Activated CD4-positive, alpha-beta T cell treated with anti-CD3 and anti-CD28 coated beads for 36 hours (primary cell): ENCODE measurements at regions of chr1 and their contacts with region 1.

Region 1: GRCh38 chr1:198638894-198639635 is at the start of gene PTPRC:
- DNase-seq: no peak
- ATAC-seq: peak; percentile 62
- H3K4me3 Mint-ChIP-seq: peak within 1 kb of the TSS; percentile 87
- H3K27ac Mint-ChIP-seq: peak within 1 kb of the TSS; percentile 99
- H3K4me1 Mint-ChIP-seq: peaks cover 52% of the 10 kb centered on the region
- H3K27me3 Mint-ChIP-seq: no peaks in the 10 kb centered on the region
- total RNA-seq, gene PTPRC: 458 to 564 TPM

Region 2: DNA sequence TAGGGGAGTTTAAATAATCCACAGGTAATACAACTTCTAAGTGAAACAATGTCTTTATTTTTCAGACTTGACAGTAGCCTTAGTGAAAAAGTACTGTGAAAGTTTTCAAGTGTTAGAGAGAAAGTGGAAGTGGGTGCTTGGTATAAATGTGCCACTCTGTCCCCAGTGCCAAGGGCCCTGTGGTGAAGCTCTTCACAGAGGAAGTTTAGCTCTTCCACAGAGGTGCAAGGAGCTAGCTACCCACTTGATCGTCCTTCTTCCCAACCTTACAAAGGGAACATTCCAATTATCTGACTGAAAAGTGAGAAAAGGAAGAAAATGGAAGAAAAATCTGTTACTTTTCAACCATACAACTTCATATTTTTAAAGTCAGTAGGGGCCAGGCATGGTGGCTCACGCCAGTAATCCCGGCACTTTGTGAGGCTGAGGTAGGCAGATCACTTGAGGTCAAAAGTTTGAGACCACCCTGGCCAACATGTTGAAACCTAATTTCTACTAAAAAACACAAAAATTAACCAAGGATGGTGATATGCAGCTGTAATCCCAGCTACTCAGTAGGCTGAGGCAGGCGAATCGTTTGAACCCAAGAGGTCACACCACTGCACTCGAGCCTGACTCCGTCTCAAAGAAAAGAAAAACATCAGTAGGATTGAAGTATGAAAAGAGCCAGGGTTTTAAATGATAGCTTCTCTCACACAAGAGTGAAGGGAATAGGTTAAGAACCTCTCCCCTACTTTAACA is 41.2 kb before region 1 on chr1:
- CTCF ChIA-PET with region 1: no interaction called
- POLR2A ChIA-PET with region 1: interaction called, 3 read pairs
- intact Hi-C with region 1: loop called (anchors 1 to 5 kb)
- DNase-seq: no peak
- ATAC-seq: no peak
- H3K4me3 Mint-ChIP-seq: peak overlapping the region; percentile 52
- H3K27ac Mint-ChIP-seq: peak overlapping the region; percentile 87
- H3K4me1 Mint-ChIP-seq: peaks cover 80% of the 10 kb centered on the region
- H3K27me3 Mint-ChIP-seq: no peaks in the 10 kb centered on the region

Region 3: GRCh38 chr1:198612471-198613260 is 26.4 kb before region 1 on chr1:
- CTCF ChIA-PET with region 1: interaction called, 11 read pairs
- POLR2A ChIA-PET with region 1: interaction called, 3 read pairs
- intact Hi-C with region 1: no loop called
- DNase-seq: no peak
- ATAC-seq: peak; percentile 48
- H3K4me3 Mint-ChIP-seq: peak overlapping the region; percentile 77
- H3K27ac Mint-ChIP-seq: peak overlapping the region; percentile 99
- H3K4me1 Mint-ChIP-seq: peaks cover 83% of the 10 kb centered on the region
- H3K27me3 Mint-ChIP-seq: no peaks in the 10 kb centered on the region

Region 4: DNA sequence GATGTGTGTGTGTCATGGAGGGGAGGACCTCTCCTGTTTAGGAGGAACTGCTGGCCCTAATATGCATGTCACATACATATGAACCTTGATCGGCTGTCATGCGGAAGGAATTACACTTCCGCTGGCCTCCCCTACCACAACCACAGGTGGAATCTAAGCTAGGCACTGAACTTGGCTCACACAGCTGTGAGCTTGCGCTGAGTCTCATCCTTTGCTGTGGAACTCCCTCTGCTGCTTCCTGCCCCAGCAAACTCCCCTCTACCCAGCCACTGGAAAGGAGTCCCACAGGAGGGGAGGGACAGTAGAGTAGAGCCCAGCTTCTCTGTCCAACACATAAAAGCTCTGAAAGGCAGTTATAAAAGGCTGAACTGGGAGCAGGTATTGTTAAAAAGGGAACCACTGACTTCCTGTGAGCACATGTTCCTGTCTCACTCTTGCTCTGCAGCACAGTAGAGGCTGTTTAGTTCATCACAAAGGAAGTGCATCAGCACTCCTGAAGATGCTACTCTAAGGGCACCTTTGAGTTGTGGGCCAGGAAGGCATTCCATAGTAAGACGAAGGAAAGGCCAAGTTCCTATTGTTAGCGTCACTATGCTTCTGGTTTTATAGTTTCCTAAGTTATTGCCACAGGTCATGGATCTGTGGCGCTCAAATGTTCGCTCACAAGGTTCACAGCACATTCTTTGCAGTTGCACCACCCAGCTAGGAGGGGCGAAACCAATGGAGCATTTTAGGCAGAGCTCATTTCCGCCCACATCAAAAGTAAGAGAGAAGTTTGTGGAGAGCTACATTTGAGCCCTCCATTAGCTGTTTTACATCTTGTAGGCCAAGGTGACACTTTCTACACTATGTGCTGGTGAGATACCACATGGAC is 17.9 kb before region 1 on chr1:
- CTCF ChIA-PET with region 1: interaction called, 110 read pairs
- POLR2A ChIA-PET with region 1: interaction called, 12 read pairs
- intact Hi-C with region 1: loop called (anchors 1 kb)
- DNase-seq: peak; percentile 84
- ATAC-seq: peak; percentile 77
- H3K4me3 Mint-ChIP-seq: peak overlapping the region; percentile 76
- H3K27ac Mint-ChIP-seq: peak overlapping the region; percentile 100
- H3K4me1 Mint-ChIP-seq: peaks cover 94% of the 10 kb centered on the region
- H3K27me3 Mint-ChIP-seq: no peaks in the 10 kb centered on the region

Region 5: GRCh38 chr1:198627436-198628066 is 11.5 kb before region 1 on chr1:
- CTCF ChIA-PET with region 1: interaction called, 110 read pairs
- POLR2A ChIA-PET with region 1: interaction called, 4 read pairs
- intact Hi-C with region 1: loop called in 1 of 2 experiments (anchors 1 kb)
- DNase-seq: no peak
- ATAC-seq: peak; percentile 68
- H3K4me3 Mint-ChIP-seq: peak overlapping the region; percentile 52
- H3K27ac Mint-ChIP-seq: peak overlapping the region; percentile 92
- H3K4me1 Mint-ChIP-seq: peaks cover 94% of the 10 kb centered on the region
- H3K27me3 Mint-ChIP-seq: no peaks in the 10 kb centered on the region

Region 6: GRCh38 chr1:198651650-198652400 is 12.8 kb after region 1 on chr1:
- CTCF ChIA-PET with region 1: interaction called, 7 read pairs
- POLR2A ChIA-PET with region 1: interaction called, 4 read pairs
- intact Hi-C with region 1: loop called (anchors 1 kb)
- DNase-seq: no peak
- ATAC-seq: no peak
- H3K4me3 Mint-ChIP-seq: peak overlapping the region; percentile 72
- H3K27ac Mint-ChIP-seq: peak overlapping the region; percentile 97
- H3K4me1 Mint-ChIP-seq: peaks cover 73% of the 10 kb centered on the region
- H3K27me3 Mint-ChIP-seq: no peaks in the 10 kb centered on the region

Region 7: GRCh38 chr1:198657550-198658064 is 18.5 kb after region 1 on chr1:
- CTCF ChIA-PET with region 1: interaction called, 4 read pairs
- POLR2A ChIA-PET with region 1: interaction called, 3 read pairs
- intact Hi-C with region 1: loop called (anchors 1 kb)
- DNase-seq: peak; percentile 55
- ATAC-seq: peak; percentile 48
- H3K4me3 Mint-ChIP-seq: peak overlapping the region; percentile 76
- H3K27ac Mint-ChIP-seq: peak overlapping the region; percentile 94
- H3K4me1 Mint-ChIP-seq: peaks cover 64% of the 10 kb centered on the region
- H3K27me3 Mint-ChIP-seq: no peaks in the 10 kb centered on the region